Testis (tissue), 5 donors: ENCODE measurements at regions of chr4 and their contacts with region 1.

Region 1: DNA sequence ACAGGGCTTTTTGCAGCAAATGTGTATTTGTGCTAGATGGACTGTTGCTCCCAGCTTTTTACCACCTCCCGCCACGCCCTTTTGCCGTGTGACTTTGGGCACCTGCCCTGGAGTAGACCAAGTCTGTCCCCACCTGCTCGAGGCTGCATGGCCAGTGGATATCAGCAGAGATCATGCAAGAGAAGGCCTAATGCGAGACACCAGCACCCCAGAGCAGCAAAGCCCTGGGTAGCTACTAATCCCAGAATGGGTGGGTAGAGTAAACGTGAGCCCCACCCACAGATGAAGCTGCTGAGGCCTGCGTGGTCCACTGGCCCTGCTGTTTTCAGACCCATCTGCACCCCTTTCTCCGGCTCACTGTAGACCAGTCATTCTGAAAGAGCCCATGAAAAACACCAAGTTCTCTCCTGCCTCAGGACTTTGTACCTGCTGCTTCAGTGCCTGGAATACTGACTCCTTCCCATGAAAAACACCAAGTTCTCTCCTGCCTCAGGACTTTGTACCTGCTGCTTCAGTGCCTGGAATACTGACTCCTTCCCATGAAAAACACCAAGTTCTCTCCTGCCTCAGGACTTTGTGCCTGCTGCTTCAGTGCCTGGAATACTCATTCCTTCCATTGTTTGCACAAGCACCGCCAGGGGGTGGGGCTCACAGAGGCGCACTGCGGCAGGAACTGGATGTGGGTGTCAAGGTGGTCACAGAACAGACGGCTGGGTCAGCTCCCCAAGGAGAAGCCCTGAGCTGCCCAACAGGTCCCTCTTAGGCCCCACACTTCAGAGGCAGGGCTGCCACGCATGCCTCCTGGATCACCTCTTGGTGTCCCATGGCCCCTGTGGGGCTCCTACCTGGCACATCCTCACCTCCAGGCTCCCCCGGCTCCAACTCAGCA is 5.1 kb upstream of the TNIP2 start:
- DNase-seq: no peak
- H3K4me3 ChIP-seq: no peak overlapping the region
- H3K27ac ChIP-seq: no peak overlapping the region
- H3K4me1 ChIP-seq: peaks cover 4% of the 10 kb centered on the region
- H3K27me3 ChIP-seq: no peaks in the 10 kb centered on the region
- CTCF ChIP-seq: no peak
- POLR2A ChIP-seq: no peak

Region 2: GRCh38 chr4:2781921-2782320 is 20.6 kb after region 1 on chr4:
- intact Hi-C with region 1: no loop called
- DNase-seq: no peak
- H3K4me3 ChIP-seq: no peak overlapping the region
- H3K27ac ChIP-seq: no peak overlapping the region
- H3K4me1 ChIP-seq: no peaks in the 10 kb centered on the region
- H3K27me3 ChIP-seq: no peaks in the 10 kb centered on the region
- CTCF ChIP-seq: no peak
- POLR2A ChIP-seq: no peak

Region 3: DNA sequence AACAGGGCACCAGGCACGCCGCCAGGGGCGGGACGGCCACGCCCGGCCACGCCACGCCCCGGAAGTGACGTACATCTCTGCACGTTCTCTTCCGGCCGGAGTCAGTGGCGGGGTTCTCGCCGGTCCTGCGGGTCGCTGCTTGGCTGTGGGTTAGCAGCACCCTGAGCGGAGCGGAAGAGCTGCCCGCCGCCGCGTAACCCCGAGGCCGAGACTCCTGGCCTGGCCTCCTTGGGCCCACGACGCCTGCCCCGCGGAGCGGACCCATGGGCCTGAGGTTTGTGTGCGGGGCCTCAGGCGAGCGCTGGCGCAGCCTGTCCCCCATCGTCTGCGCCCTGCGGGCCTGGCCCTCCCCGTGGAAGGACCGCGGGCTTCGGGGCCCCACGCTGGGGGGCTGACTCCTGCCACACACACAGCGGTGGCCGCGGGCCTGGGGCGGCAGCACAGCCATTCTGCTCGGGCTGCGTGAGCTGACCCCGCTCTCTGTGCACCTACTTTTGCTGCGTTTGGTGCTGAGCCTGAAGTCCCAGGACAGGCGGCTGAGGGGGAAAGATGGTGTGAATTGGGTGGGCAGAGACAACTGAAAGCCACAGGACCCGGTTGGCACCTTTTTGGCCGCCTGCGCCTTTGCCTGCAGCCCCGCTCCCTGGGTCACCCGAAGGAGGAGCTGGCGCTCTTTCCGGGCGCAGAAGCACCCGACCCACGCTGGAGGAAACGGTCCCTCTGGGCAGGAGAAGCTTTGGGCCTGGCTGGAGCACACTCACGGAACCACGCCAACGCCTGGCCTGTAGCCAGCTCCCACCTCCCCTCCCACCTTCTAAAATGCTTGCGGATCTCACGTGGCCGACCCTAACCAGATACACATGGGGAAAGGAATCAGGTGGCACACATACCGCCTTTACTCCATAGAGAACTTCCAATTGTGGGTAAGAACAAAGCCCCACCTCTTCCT is 173.8 kb after region 1 on chr4:
- intact Hi-C with region 1: loop called (anchors 10 kb)
- DNase-seq: peak; percentile 97
- H3K4me3 ChIP-seq: peak overlapping the region; percentile 90 to 97
- H3K27ac ChIP-seq: peak overlapping the region; percentile 40 to 81
- H3K4me1 ChIP-seq: peaks cover 13% of the 10 kb centered on the region
- H3K27me3 ChIP-seq: no peaks in the 10 kb centered on the region
- CTCF ChIP-seq: peak in 1 of 3 experiments; percentile 36
- POLR2A ChIP-seq: peak; percentile 72

Region 4: GRCh38 chr4:3047464-3048286 is 286.4 kb after region 1 on chr4:
- intact Hi-C with region 1: loop called (anchors 10 kb)
- DNase-seq: peak; percentile 83
- H3K4me3 ChIP-seq: no peak overlapping the region
- H3K27ac ChIP-seq: no peak overlapping the region
- H3K4me1 ChIP-seq: no peaks in the 10 kb centered on the region
- H3K27me3 ChIP-seq: no peaks in the 10 kb centered on the region
- CTCF ChIP-seq: peak; percentile 31 to 64 (median 47)
- POLR2A ChIP-seq: no peak

Region 5: DNA sequence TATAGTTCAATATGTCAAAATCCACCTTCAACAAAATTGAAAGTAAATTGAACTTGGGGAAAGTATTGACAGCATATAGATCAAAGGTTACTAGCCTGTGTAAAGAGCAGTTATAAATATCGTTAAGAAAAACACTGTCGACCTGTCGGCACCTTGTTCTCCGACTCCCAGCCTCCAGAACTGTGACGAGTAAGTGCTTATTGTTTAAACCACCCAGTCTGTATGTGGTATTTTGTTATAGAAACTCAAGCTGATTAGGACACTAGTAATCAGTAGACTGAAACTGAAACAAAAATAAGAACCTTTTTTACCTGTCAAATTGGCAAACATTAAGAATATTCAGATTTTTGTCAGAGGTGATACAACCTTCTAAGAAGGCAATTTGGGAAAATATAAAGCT is 330.2 kb after region 1 on chr4:
- intact Hi-C with region 1: no loop called
- DNase-seq: no peak
- H3K4me3 ChIP-seq: no peak overlapping the region
- H3K27ac ChIP-seq: no peak overlapping the region
- H3K4me1 ChIP-seq: no peaks in the 10 kb centered on the region
- H3K27me3 ChIP-seq: no peaks in the 10 kb centered on the region
- CTCF ChIP-seq: no peak
- POLR2A ChIP-seq: no peak